ENCODE measurements at regions of chrX and their contacts with region 1.

Region 1: GRCh38 chrX:124736553-124737240 is 390.3 kb downstream of the SH2D1A start:
- DNase-seq: peak; percentile 15 to 78 (median 65)
- ATAC-seq: peak; percentile 88
- H3K4me3 ChIP-seq: peak overlapping the region; percentile 41
- H3K4me3 Mint-ChIP-seq: peak overlapping the region; percentile 70 to 83 (median 79)
- H3K27ac ChIP-seq: peak overlapping the region; percentile 39
- H3K27ac Mint-ChIP-seq: peak overlapping the region; percentile 81 to 93 (median 86)
- H3K4me1 ChIP-seq: peaks cover 10 to 17% of the 10 kb centered on the region in 2 donors
- H3K4me1 Mint-ChIP-seq: peaks cover 10 to 57% (median 45%) of the 10 kb centered on the region in 7 donors
- H3K27me3 ChIP-seq: no peaks in the 10 kb centered on the region
- H3K27me3 Mint-ChIP-seq: no peaks in the 10 kb centered on the region

Region 2: DNA sequence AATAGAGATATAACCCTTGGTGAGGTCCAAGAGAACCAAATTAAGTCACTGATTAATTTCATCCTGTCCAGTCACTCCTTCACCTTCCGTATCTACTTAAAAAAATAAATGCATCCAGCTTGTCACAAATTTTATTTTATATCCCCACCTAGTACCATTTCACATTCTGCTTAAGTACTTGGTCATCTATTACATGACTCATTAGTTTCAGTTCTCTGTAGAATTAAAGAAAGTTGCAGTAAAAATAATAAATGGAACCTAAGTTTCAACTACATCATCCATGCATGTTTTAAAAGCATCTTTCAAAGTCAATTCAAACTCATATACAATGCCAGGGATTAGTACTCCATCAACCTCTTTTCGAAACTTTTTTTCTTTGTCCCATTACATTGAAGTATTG is 260.1 kb before region 1 on chrX:
- CTCF ChIA-PET with region 1: no interaction called
- POLR2A ChIA-PET with region 1: no interaction called
- intact Hi-C with region 1: no loop called
- DNase-seq: no peak
- ATAC-seq: no peak
- H3K4me3 ChIP-seq: no peak overlapping the region
- H3K4me3 Mint-ChIP-seq: no peak overlapping the region
- H3K27ac ChIP-seq: no peak overlapping the region
- H3K27ac Mint-ChIP-seq: no peak overlapping the region
- H3K4me1 ChIP-seq: no peaks in the 10 kb centered on the region
- H3K4me1 Mint-ChIP-seq: peaks cover 0 to 6% (median 0%) of the 10 kb centered on the region in 7 donors
- H3K27me3 ChIP-seq: no peaks in the 10 kb centered on the region
- H3K27me3 Mint-ChIP-seq: no peaks in the 10 kb centered on the region

Region 3: GRCh38 chrX:124665621-124666400 is 70.9 kb before region 1 on chrX:
- CTCF ChIA-PET with region 1: no interaction called
- POLR2A ChIA-PET with region 1: no interaction called
- intact Hi-C with region 1: loop called in 1 of 2 experiments (anchors 5 kb)
- DNase-seq: no peak
- ATAC-seq: no peak
- H3K4me3 ChIP-seq: no peak overlapping the region
- H3K4me3 Mint-ChIP-seq: no peak overlapping the region
- H3K27ac ChIP-seq: no peak overlapping the region
- H3K27ac Mint-ChIP-seq: no peak overlapping the region
- H3K4me1 ChIP-seq: no peaks in the 10 kb centered on the region
- H3K4me1 Mint-ChIP-seq: peaks cover 0 to 13% (median 7%) of the 10 kb centered on the region in 7 donors
- H3K27me3 ChIP-seq: no peaks in the 10 kb centered on the region
- H3K27me3 Mint-ChIP-seq: peaks cover 0 to 5% (median 0%) of the 10 kb centered on the region in 5 donors

Region 4: DNA sequence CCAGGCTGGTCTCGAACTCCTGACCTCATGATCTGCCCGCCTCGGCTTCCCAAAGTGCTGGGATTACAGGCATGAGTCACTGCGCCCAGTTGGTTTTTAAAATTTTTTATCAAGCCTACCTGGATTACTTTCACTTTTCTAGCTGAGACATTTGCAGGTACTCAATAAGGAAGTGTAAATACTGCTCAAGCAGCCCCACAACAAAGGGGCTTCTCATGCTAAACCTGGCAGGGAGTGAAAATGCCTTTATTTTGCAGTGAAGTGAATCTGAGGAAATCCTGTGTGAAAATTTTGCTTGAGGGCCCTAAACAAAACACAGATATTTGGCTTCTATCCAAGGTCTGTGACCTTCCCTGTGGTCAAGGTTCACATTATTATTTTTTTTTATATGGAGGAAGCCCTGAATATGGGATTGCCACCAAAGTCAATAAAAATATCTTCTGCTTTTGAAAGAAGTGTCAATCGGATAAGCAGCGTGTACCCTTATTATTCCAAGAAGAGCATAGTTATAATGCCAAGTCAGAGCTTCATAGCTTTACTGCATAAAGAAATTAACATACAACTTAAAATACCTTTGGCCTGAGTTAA is 90.7 kb after region 1 on chrX:
- CTCF ChIA-PET with region 1: no interaction called
- POLR2A ChIA-PET with region 1: no interaction called
- intact Hi-C with region 1: loop called in 1 of 2 experiments (anchors 1 kb)
- DNase-seq: no peak
- ATAC-seq: no peak
- H3K4me3 ChIP-seq: no peak overlapping the region
- H3K4me3 Mint-ChIP-seq: peak overlapping the region in 1 of 10 donors; percentile 14
- H3K27ac ChIP-seq: no peak overlapping the region
- H3K27ac Mint-ChIP-seq: peak overlapping the region in 3 of 9 donors; percentile 23 to 53 (median 30)
- H3K4me1 ChIP-seq: no peaks in the 10 kb centered on the region
- H3K4me1 Mint-ChIP-seq: peaks cover 2 to 35% (median 16%) of the 10 kb centered on the region in 7 donors
- H3K27me3 ChIP-seq: no peaks in the 10 kb centered on the region
- H3K27me3 Mint-ChIP-seq: no peaks in the 10 kb centered on the region